Activated CD4-positive, alpha-beta memory T cell treated with anti-CD3 and anti-CD28 coated beads for 36 hours (primary cell): ENCODE measurements at regions of chr14 and their contacts with region 1.

Region 1: GRCh38 chr14:90331497-90332435 is at the start of gene NRDE2:
- DNase-seq: peak; percentile 99
- H3K4me3 Mint-ChIP-seq: peak within 1 kb of the TSS; percentile 88
- H3K27ac Mint-ChIP-seq: peak within 1 kb of the TSS; percentile 91
- H3K4me1 Mint-ChIP-seq: peaks cover 26% of the 10 kb centered on the region
- H3K27me3 Mint-ChIP-seq: peaks cover 3% of the 10 kb centered on the region
- total RNA-seq, gene NRDE2: 18.9 to 24.8 TPM

Region 2: DNA sequence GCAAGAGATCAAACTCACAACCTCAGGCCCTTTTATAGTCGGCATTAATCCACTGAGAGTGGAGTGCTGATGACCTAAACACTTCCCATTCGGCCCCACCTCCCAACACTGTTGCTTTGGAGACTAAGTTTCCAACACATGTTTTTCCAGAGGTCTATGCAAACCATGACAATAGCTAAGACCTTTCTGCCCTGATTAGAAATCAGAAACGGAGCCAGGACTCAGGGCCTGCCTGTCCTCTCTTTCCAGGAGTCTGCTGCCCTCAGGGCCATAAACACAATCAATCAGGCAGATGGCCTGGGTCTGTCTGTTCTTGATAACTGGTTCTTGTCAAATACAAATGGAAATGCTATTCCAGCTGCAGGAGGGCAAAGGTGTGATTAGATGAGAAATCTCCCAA is 172.6 kb before region 1 on chr14:
- CTCF ChIA-PET with region 1: no interaction called
- POLR2A ChIA-PET with region 1: no interaction called
- intact Hi-C with region 1: no loop called
- DNase-seq: no peak
- H3K4me3 Mint-ChIP-seq: no peak overlapping the region
- H3K27ac Mint-ChIP-seq: no peak overlapping the region
- H3K4me1 Mint-ChIP-seq: no peaks in the 10 kb centered on the region
- H3K27me3 Mint-ChIP-seq: peaks cover 10% of the 10 kb centered on the region

Region 3: DNA sequence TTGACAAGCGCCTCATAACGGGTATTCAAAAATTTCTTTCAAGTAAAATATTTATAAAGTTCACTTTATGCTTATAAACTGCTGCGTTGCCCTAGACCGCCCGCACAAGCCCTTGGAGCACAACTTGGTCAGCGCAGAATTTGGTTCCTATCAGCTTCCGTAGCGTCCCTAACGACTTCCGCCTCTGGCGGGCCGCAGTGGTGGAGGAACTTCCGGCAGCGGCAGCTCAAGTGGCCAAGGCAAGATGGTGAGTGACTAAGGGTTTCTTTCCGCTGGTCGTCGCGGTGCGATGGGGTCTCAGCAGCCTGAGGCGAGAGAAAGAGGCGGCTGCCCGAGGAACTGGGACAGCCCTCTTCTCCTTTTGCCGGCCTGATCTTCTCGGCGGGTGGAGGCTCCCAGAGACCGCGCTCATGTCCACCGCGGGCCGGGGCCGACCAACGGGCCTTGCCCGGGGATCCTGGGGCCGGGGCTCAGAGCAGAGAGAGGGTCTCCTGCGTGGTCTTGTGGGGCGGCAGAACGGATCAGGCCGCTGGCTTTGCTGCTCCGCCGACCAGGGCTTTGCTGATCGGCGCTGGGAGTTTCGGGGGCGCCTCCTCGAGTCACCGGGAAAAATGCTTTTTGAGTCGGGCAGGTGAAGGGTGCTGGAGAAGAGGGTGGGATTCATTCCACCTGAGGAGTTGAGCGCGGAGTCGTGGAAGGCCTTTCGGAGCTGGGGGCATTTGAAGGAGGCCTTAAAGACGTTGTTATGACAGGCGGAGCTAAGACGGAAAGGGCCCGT is 75.2 kb before region 1 on chr14 and contains the start of gene PSMC1:
- CTCF ChIA-PET with region 1: no interaction called
- POLR2A ChIA-PET with region 1: no interaction called
- intact Hi-C with region 1: loop called (anchors 1 kb)
- DNase-seq: peak; percentile 95
- H3K4me3 Mint-ChIP-seq: peak within 1 kb of the TSS; percentile 98
- H3K27ac Mint-ChIP-seq: peak within 1 kb of the TSS; percentile 94
- H3K4me1 Mint-ChIP-seq: peaks cover 26% of the 10 kb centered on the region
- H3K27me3 Mint-ChIP-seq: peaks cover 5% of the 10 kb centered on the region
- total RNA-seq, gene PSMC1: 107 to 108 TPM

Region 4: GRCh38 chr14:90274808-90275457 is 56.8 kb before region 1 on chr14:
- CTCF ChIA-PET with region 1: no interaction called
- POLR2A ChIA-PET with region 1: no interaction called
- intact Hi-C with region 1: loop called (anchors 1 kb)
- DNase-seq: peak; percentile 65
- H3K4me3 Mint-ChIP-seq: peak overlapping the region; percentile 18
- H3K27ac Mint-ChIP-seq: peak overlapping the region; percentile 95
- H3K4me1 Mint-ChIP-seq: peaks cover 22% of the 10 kb centered on the region
- H3K27me3 Mint-ChIP-seq: no peaks in the 10 kb centered on the region

Region 5: DNA sequence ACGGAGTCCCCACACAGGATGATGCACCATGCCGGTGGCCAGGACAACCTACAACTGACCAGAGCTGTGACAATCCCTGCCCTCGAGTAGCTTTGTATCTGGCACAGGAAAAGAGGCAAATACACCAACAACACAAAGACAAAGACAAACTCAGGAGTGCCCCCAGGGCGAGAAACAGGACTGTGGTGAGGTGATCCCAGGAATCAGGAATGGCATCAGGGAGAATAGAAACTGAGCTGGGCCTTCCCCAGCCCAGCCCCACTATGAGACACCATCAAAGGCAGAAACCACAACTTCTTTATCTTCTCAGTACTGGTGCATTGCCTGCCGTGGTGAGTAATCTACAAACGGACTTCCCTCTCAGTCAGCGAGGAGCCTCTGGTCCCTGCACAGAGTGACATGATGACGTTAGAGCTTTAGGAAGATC is 326.8 kb after region 1 on chr14:
- CTCF ChIA-PET with region 1: no interaction called
- POLR2A ChIA-PET with region 1: no interaction called
- intact Hi-C with region 1: no loop called
- DNase-seq: peak; percentile 41
- H3K4me3 Mint-ChIP-seq: no peak overlapping the region
- H3K27ac Mint-ChIP-seq: no peak overlapping the region
- H3K4me1 Mint-ChIP-seq: peaks cover 11% of the 10 kb centered on the region
- H3K27me3 Mint-ChIP-seq: peaks cover 2% of the 10 kb centered on the region